Activated CD4-positive, alpha-beta memory T cell treated with anti-CD3 and anti-CD28 coated beads, Interleukin-2, amount 10 ng/mL, durations not matched to agents 7 days and 5 days (primary cell): ENCODE measurements at regions of chr14 and their contacts with region 1.

Region 1: DNA sequence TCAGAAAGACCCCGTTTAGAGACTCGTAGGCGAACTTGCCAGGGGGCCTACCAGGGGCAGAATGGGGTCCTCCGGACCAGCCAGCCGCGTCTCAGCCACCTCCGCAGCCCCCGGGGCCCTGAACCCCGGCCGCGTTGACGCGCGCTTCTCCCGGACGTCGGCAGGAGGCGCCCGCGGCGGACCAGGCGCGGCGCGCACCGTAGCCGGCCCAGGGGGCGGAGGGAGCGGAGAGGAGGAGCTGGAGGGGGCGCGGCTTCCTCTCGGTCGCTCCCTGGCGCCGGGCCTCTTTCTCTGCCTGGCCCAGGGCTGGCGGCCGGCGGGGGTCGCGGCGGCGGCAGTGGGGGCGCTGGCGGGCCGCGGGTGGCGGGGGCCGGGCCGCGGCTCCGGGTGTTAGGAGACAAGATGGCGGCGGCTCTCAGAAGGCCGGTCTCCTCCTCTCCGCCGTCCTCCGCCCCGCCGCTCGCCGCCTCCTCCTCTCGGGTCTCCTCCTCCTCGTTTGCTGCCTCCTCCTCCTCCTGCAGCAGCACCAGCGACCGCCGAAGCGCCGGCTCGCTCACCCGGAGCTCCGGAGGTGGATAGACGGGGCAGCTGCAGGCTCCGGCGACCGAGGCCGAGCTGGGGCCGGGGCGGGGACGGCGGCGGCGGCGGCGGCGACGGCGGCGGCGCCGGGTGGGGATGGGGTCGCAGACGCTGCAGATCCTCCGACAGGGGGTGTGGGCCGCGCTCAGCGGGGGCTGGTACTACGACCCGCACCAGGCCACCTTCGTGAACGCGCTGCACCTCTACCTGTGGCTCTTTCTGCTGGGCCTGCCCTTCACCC is at the start of gene PCNX1:
- DNase-seq: peak; percentile 90
- H3K4me3 Mint-ChIP-seq: peak within 1 kb of the TSS; percentile 81
- H3K27ac Mint-ChIP-seq: peak within 1 kb of the TSS; percentile 86
- H3K4me1 Mint-ChIP-seq: peaks cover 60% of the 10 kb centered on the region
- H3K27me3 Mint-ChIP-seq: peaks cover 8% of the 10 kb centered on the region
- total RNA-seq, gene PCNX1: 56.9 to 60.4 TPM

Region 2: GRCh38 chr14:70816525-70816924 is 90.9 kb before region 1 on chr14:
- CTCF ChIA-PET with region 1: interaction called, 36 read pairs
- POLR2A ChIA-PET with region 1: interaction called, 26 read pairs
- DNase-seq: no peak
- H3K4me3 Mint-ChIP-seq: no peak overlapping the region
- H3K27ac Mint-ChIP-seq: no peak overlapping the region
- H3K4me1 Mint-ChIP-seq: peaks cover 10% of the 10 kb centered on the region
- H3K27me3 Mint-ChIP-seq: peaks cover 17% of the 10 kb centered on the region

Region 3: DNA sequence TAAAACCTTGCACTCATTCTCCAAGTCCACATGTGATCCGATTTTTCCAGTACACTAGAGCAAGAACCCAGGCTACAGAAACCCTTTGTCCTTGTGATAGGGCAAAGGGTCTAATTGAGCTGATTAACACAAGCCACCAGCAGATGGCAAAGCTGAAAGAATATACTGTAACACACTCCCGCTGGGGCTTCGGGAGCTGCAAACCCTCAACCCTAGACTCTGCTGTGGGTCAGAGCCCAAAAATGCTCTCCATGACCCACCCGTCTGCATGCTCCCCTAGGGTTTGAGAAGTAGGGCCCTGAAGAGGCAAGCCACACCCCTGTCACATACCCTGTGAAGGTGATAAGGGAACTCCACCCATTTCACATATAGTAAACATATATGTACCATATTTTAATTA is 33.8 kb before region 1 on chr14:
- CTCF ChIA-PET with region 1: interaction called, 15 read pairs
- POLR2A ChIA-PET with region 1: interaction called, 16 read pairs
- DNase-seq: no peak
- H3K4me3 Mint-ChIP-seq: no peak overlapping the region
- H3K27ac Mint-ChIP-seq: no peak overlapping the region
- H3K4me1 Mint-ChIP-seq: peaks cover 25% of the 10 kb centered on the region
- H3K27me3 Mint-ChIP-seq: no peaks in the 10 kb centered on the region

Region 4: DNA sequence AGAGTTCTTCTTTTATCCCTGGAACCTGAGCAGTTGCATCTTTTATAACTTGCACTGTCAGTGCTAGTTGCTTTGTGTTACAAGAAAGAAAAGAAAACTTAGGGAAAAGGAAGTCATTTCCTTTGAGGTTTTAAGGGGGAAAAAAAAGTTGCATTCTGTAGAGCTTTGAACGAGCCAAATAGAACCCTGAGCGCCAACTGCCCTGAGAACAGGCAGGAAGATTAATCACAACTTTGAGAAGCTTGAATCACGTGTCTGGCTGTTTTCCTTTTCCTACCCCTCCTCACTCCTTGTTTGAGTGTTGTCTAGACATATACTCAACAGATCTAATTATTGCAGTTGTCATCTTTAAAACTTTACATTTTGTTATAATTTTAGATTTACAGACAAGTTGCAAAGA is 12.4 kb after region 1 on chr14:
- CTCF ChIA-PET with region 1: interaction called, 38 read pairs
- POLR2A ChIA-PET with region 1: interaction called, 13 read pairs
- DNase-seq: no peak
- H3K4me3 Mint-ChIP-seq: no peak overlapping the region
- H3K27ac Mint-ChIP-seq: peak overlapping the region; percentile 74
- H3K4me1 Mint-ChIP-seq: peaks cover 83% of the 10 kb centered on the region
- H3K27me3 Mint-ChIP-seq: no peaks in the 10 kb centered on the region

Region 5: DNA sequence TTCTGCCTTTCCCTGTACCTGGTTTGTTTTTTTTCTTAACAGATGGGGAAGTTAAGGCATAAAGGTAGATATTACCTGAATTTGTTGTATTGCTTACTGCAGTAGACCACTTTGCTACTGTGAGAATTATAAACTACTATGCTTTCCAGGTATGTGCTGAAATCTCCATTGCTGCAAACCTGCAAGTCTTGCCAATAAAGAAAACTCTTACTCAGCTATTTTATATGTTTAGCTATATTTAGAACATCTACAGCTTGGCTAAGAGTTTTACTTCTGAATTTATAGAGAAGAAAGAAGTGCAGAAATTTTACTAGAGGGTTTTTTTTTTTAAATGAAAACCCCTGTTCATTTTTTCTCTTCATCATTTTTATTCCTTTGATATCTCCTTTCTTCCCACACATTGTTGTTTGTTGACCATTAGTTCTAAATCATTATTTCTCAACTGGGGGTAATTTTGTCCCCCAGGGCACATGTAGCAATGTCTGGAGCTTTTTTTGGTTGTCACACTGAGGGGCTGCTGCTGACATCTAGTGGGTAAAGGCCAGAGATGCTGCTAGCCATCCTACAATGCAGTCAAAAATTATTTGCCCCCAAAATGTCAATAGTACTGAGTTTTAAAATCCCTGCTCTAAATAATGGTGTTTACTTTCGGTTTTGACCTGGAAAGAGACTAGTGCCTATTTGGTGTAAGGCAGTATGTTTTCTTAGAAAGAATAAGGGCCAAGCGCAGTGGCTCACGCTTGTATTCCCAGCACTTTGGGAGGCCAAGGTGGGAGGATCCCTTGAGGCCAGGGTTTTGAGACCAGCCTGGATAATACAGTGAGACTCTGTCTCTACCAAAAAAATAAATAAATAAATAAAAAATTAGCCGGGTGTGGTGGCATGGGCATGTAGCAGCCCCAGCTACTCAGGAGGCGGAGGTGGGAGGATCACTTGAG is 48.4 kb after region 1 on chr14:
- CTCF ChIA-PET with region 1: interaction called, 166 read pairs
- POLR2A ChIA-PET with region 1: interaction called, 17 read pairs
- DNase-seq: peak; percentile 53
- H3K4me3 Mint-ChIP-seq: no peak overlapping the region
- H3K27ac Mint-ChIP-seq: no peak overlapping the region
- H3K4me1 Mint-ChIP-seq: peaks cover 20% of the 10 kb centered on the region
- H3K27me3 Mint-ChIP-seq: no peaks in the 10 kb centered on the region